ENCODE measurements at regions of chrX and their contacts with region 1.

Region 1: DNA sequence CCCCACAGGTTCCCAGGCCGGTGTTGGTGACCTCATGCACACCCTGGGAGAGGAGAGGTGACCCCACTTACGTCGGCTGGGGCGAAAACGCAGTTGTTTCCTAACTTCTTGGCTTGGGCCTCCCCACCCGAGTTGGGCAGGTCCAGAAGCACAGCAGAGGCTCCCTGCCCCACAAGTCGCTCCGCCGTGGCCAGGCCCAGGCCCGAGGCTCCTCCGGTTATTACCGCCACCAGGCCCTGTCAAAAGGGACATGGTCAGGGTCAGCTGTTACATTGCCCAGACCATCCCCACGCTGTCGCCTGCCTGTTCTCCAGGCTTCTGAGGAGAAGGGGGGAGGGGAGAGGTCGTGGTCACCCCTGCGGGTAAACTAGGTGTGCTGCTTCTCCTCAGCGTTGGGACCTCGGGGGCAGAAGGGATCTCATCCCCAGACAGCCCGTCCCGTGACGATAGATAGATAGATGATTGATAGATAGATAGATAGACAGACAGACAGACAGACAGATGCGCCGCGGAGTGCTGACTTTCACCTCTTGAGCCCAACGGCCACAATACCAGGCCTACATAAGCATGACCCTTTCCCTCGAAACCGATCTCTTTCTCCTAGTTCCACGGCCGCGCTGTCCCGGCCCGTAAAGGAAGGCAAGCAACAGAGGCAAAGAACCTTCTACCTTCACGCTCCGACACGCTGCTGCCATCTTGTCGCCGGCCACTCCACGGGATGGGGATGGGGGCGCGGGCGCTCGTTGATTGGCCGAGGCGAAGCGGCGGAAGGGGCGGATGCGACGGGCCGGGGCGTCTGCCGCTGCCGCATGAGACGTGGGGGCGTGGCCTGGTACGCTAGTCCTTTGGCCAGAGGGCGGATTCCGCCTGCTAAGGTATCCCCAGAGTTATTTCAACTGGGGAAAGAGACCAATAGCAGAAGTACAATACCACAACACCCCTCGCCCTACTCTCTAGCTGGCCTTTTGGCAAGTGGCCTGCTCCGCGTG is at the start of gene HSD17B10:
- DNase-seq: peak; percentile 56
- ATAC-seq: peak; percentile 99
- H3K4me3 ChIP-seq: peak within 1 kb of the TSS; percentile 81
- H3K27ac ChIP-seq: peak within 1 kb of the TSS; percentile 61
- H3K4me1 ChIP-seq: peaks cover 2% of the 10 kb centered on the region; the same call in 1 of the 2 replicates
- H3K27me3 ChIP-seq: no peaks in the 10 kb centered on the region
- CTCF ChIP-seq: no peak
- EP300 ChIP-seq: no peak
- POLR2A ChIP-seq: peak; percentile 86
- RAD21 ChIP-seq: no peak
- polyA plus RNA-seq, gene HSD17B10: 43.7 to 114 TPM

Region 2: DNA sequence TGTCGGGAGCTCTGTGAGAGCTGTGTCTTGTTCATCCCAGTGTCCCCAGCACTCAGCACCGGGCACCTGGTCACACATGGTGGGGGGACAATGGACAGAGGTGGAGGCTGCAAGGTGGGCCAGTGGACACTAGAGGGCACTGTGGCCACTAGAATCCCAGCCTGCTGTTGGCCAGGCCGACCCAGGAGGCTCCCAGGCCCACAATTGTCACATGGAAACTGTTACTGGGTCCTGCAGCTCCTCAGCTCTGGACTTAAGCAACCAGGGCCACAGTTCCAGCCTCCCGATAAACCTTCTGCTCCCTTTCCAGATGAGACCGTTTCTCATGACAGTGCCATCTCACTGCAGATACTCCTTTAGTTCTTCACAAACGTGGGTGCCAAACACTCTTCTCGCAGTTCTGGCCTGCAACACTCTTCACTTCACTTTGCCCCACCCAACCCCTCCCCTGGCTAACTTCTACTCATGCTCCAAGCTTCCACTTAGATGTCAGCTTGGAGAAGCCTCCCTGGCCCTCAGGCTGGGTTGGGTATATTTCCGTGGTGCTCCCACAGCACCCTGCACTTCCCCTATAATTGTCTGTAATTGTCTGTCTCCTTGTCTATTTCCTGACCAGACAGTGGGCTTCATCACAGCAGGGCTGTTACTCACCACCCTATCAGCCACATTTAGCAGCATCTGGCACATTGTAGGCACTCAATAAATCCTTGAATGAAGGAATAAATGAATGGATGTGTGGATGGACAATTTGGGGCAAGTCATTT is 149.1 kb before region 1 on chrX:
- CTCF ChIA-PET with region 1: interaction called, 12 read pairs
- POLR2A ChIA-PET with region 1: no interaction called
- RAD21 ChIA-PET with region 1: no interaction called
- SMC1A ChIA-PET with region 1: interaction called, 4 read pairs
- in situ Hi-C with region 1: no loop called
- intact Hi-C with region 1: no loop called
- DNase-seq: peak; percentile 8
- ATAC-seq: peak; percentile 90
- H3K4me3 ChIP-seq: no peak overlapping the region
- H3K27ac ChIP-seq: no peak overlapping the region
- H3K4me1 ChIP-seq: no peaks in the 10 kb centered on the region; the same call in 1 of the 2 replicates
- H3K27me3 ChIP-seq: peaks cover 0 to 2% of the 10 kb centered on the region in 2 experiments; a peak in 1 of 4 replicates
- CTCF ChIP-seq: peak; percentile 77 to 91 (median 89)
- EP300 ChIP-seq: no peak
- POLR2A ChIP-seq: no peak
- RAD21 ChIP-seq: peak; percentile 38; the same call in 1 of the 2 replicates

Region 3: GRCh38 chrX:53445977-53446376 is 12.0 kb after region 1 on chrX:
- CTCF ChIA-PET with region 1: interaction called, 36 read pairs
- POLR2A ChIA-PET with region 1: no interaction called
- RAD21 ChIA-PET with region 1: interaction called, 3 read pairs
- SMC1A ChIA-PET with region 1: interaction called, 7 read pairs
- in situ Hi-C with region 1: no loop called
- intact Hi-C with region 1: no loop called
- DNase-seq: no peak
- ATAC-seq: peak; percentile 73
- H3K4me3 ChIP-seq: no peak overlapping the region
- H3K27ac ChIP-seq: no peak overlapping the region
- H3K4me1 ChIP-seq: peaks cover 4% of the 10 kb centered on the region; the same call in 1 of the 2 replicates
- H3K27me3 ChIP-seq: no peaks in the 10 kb centered on the region
- CTCF ChIP-seq: peak; percentile 67 to 77 (median 72)
- EP300 ChIP-seq: no peak
- POLR2A ChIP-seq: no peak
- RAD21 ChIP-seq: peak; percentile 63

Region 4: DNA sequence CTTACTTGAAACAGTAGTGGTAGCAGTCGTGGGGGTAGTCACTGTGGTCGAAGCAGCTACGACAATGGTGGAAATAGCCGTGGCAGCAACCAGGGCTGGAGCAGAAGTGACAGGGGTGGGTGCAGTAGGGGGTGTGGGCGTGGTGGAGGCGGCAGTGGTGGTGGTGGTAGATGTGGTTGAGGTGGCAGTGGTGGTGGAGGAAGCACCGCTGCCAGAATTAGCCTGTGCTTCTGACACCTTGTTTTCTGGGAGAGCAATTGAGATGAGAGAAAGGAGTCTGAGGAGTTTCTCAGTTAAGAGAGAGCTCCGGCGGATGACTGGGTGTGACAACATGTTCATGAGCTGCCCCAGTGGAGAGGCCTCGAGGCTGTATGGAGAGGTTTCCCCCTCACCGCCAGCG is 113.7 kb after region 1 on chrX:
- CTCF ChIA-PET with region 1: no interaction called
- POLR2A ChIA-PET with region 1: no interaction called
- RAD21 ChIA-PET with region 1: no interaction called
- SMC1A ChIA-PET with region 1: no interaction called
- in situ Hi-C with region 1: no loop called
- intact Hi-C with region 1: no loop called
- DNase-seq: no peak
- ATAC-seq: no peak
- H3K4me3 ChIP-seq: no peak overlapping the region
- H3K27ac ChIP-seq: no peak overlapping the region
- H3K4me1 ChIP-seq: no peaks in the 10 kb centered on the region
- H3K27me3 ChIP-seq: no peaks in the 10 kb centered on the region
- CTCF ChIP-seq: no peak
- EP300 ChIP-seq: no peak
- POLR2A ChIP-seq: peak; percentile 22; the same call in 1 of the 2 replicates
- RAD21 ChIP-seq: no peak